HepG2 (cell line): ENCODE measurements at regions of chr10 and their contacts with region 1.

Region 1: GRCh38 chr10:65843203-65843602 is 1082.6 kb upstream of the LRRTM3 start:
- DNase-seq: no peak
- ATAC-seq: no peak
- H3K4me3 ChIP-seq: no peak overlapping the region
- H3K27ac ChIP-seq: no peak overlapping the region
- H3K4me1 ChIP-seq: no peaks in the 10 kb centered on the region
- H3K27me3 ChIP-seq: no peaks in the 10 kb centered on the region
- CTCF ChIP-seq: no peak
- EP300 ChIP-seq: no peak
- POLR2A ChIP-seq: no peak
- RAD21 ChIP-seq: no peak

Region 2: DNA sequence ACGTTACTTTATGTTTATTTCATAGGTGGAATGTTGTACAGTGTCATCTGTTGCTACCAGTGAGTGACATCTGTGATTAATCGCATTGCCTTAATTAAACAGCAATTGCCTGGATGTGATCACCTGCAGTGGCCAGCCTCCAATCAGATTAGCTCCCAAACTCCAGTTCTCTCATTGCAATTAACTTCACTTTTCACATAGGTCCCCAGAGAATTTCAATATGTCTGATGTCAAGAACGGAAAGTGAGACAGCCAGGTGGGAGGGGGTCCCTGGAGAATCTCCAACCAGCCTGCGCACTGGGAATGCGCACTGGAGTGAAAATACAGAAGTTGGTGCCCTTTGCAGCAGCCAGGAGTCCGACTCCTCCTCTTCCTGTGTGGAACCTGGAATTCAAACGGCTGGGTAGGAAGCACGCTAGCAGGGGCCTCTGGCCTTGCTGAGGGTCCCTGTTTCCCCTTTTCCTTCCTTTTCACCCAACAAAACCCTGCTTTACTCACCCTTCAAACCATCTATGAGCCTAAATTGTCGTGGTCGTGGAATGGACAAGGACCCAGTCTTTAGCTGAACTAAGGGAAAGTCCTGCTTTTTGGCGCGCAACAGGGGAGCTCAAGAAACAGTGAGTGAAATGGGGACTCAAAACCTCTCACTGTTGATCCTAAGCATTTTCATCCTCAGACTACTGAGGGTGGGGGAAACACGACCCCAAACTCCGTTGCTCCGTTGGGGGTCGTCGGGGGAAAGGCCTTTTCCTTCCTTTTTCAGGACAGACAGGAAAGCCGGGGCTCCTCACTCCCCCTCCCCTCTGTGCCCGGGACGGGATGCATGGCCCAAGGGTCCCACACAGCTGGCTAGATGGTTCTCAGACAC is 272.8 kb before region 1 on chr10:
- CTCF ChIA-PET with region 1: no interaction called
- POLR2A ChIA-PET with region 1: no interaction called
- in situ Hi-C with region 1: no loop called
- intact Hi-C with region 1: loop called (anchors 5 kb)
- DNase-seq: peak; percentile 67
- ATAC-seq: peak; percentile 99
- H3K4me3 ChIP-seq: peak overlapping the region; percentile 71 to 80 (median 74)
- H3K27ac ChIP-seq: peak overlapping the region; percentile 75
- H3K4me1 ChIP-seq: no peaks in the 10 kb centered on the region; the same call in 1 of the 2 replicates
- H3K27me3 ChIP-seq: no peaks in the 10 kb centered on the region; a peak in 1 of 5 replicates
- CTCF ChIP-seq: no peak
- EP300 ChIP-seq: no peak
- POLR2A ChIP-seq: peak; percentile 81 to 83
- RAD21 ChIP-seq: no peak

Region 3: GRCh38 chr10:65778753-65779152 is 64.5 kb before region 1 on chr10:
- CTCF ChIA-PET with region 1: no interaction called
- POLR2A ChIA-PET with region 1: no interaction called
- in situ Hi-C with region 1: no loop called
- intact Hi-C with region 1: no loop called
- DNase-seq: no peak
- ATAC-seq: no peak
- H3K4me3 ChIP-seq: no peak overlapping the region
- H3K27ac ChIP-seq: no peak overlapping the region
- H3K4me1 ChIP-seq: no peaks in the 10 kb centered on the region
- H3K27me3 ChIP-seq: no peaks in the 10 kb centered on the region
- CTCF ChIP-seq: no peak
- EP300 ChIP-seq: no peak
- POLR2A ChIP-seq: no peak
- RAD21 ChIP-seq: no peak